Panc1 (cell line): ENCODE measurements at regions of chr2 and their contacts with region 1.

Region 1: GRCh38 chr2:17851731-17852585 is 26.5 kb upstream of the KCNS3 start:
- DNase-seq: peak; percentile 67
- ATAC-seq: peak; percentile 81
- H3K4me3 ChIP-seq: no peak overlapping the region
- H3K27ac ChIP-seq: no peak overlapping the region
- H3K4me1 ChIP-seq: no peaks in the 10 kb centered on the region; the same call in 1 of the 2 replicates
- H3K27me3 ChIP-seq: no peaks in the 10 kb centered on the region
- CTCF ChIP-seq: peak; percentile 90

Region 2: DNA sequence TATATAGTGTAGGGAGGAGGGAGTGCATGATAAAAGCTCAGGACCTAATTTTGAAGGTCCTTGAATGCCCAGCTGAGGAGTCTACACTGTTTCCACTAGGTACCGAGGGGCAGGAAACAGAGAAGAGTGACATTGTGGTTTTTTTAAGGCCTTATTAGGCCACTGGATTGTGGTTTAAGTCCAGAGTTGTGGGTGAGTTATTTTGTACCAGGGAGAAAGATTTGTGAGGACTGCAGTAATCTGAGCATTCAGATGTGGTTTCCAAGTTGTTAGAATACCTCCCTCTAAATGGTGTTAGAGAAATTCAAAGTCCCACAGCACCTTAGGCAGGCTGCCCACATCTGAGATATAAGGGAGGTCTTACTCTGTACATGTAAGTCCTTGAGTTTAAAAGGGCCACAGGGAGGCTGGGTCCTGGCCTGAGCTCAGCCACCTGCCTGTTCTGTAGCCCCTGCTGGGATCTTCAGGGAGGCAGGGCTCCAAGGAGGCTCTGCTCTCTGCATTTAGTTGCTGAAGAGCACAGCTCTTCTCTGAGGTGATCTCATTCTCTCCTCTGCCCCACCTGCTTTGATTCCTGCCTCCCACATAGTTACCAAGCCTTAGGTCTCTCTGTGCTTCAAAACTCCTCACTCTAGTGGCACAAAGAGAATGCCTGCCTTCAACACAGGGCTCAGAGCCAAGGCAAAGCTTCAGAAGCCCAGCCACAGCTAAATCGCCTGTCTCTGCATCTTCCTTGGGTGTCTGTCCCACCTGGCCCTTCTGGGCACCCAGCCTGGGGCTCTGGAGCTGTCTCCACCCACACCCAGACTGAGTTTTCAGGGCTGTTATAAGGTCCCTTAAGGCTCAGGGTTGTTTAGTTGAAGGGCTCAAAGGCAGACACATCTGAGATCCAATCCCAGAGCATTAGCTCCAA is 223.4 kb before region 1 on chr2:
- CTCF ChIA-PET with region 1: no interaction called
- POLR2A ChIA-PET with region 1: no interaction called
- in situ Hi-C with region 1: no loop called
- intact Hi-C with region 1: no loop called
- DNase-seq: no peak
- ATAC-seq: no peak
- H3K4me3 ChIP-seq: no peak overlapping the region
- H3K27ac ChIP-seq: no peak overlapping the region
- H3K4me1 ChIP-seq: no peaks in the 10 kb centered on the region
- H3K27me3 ChIP-seq: no peaks in the 10 kb centered on the region
- CTCF ChIP-seq: no peak

Region 3: DNA sequence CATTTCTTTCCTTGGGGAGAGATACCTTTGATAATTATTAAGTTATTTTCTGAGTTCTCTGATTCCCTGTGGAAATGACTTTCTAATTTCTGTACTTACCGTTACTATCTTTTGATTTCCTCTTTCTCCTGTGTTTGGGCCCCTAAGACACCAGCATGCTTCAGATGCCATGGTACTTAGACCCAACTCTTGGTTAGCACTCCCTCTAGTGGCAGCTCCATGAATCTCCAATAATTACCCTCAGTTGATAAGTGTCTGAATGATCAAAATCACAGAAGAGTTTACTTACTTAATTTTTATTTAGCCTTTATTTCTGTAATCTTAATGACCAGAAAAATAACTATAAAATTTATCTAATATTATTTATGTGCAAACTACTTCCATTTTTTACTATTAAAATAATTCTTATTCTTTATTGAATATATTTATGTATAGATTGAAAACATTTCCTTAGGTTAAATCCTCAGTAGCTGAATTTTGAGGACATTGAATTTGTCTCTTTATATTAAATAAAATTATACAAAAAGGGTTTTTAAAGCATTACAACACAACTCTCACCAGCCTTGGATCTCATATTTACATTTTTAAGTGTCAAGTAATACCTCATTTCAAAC is 326.9 kb after region 1 on chr2:
- CTCF ChIA-PET with region 1: no interaction called
- POLR2A ChIA-PET with region 1: no interaction called
- in situ Hi-C with region 1: no loop called
- intact Hi-C with region 1: loop called (anchors 1 kb)
- DNase-seq: peak; percentile 25
- ATAC-seq: peak; percentile 87
- H3K4me3 ChIP-seq: no peak overlapping the region
- H3K27ac ChIP-seq: no peak overlapping the region
- H3K4me1 ChIP-seq: no peaks in the 10 kb centered on the region
- H3K27me3 ChIP-seq: no peaks in the 10 kb centered on the region
- CTCF ChIP-seq: peak; percentile 78

Region 4: DNA sequence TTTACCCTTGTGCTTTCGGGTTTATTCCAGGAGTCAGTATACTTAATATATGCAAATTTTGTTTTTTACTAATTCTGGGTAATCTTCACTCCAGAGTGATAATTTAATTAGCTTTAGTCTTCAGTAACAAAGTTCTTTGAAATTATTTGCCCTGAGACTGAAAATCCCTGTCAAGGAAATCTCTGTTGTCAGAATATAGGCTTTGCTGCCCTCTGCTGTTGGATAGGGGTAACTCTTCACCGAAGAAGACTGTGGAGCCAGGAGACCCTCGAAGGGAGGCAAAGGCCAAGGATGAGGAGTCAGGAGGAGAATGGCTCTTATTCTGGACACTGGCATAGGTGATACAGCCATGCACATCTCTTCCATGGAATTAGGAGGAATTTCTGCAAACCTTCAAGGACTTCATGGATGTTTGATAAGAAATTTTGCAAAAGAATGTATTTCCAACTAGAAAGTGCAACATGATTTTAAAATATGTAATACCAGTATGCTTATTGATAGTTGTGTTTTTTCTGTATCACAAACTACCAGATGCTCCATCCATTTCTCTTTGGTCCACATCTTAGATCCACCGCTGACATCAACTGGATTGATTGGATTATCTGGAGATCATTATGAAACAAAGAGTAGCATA is 526.2 kb after region 1 on chr2:
- CTCF ChIA-PET with region 1: no interaction called
- POLR2A ChIA-PET with region 1: no interaction called
- in situ Hi-C with region 1: no loop called
- intact Hi-C with region 1: loop called (anchors 1 kb)
- DNase-seq: no peak
- ATAC-seq: peak; percentile 84
- H3K4me3 ChIP-seq: no peak overlapping the region
- H3K27ac ChIP-seq: no peak overlapping the region
- H3K4me1 ChIP-seq: no peaks in the 10 kb centered on the region
- H3K27me3 ChIP-seq: 0 out of 2 replicates have a peak, but pooled peaks cover 4% of the 10 kb centered on the region
- CTCF ChIP-seq: peak; percentile 86